OCI-LY7 (cell line): ENCODE measurements at regions of chr2 and their contacts with region 1.

Region 1: GRCh38 chr2:127591221-127591923 is 54.6 kb upstream of the GPR17 start:
- DNase-seq: peak; percentile 74
- H3K4me3 ChIP-seq: no peak overlapping the region
- H3K27ac ChIP-seq: no peak overlapping the region
- H3K4me1 ChIP-seq: no peaks in the 10 kb centered on the region
- CTCF ChIP-seq: peak; percentile 96

Region 2: GRCh38 chr2:127576433-127577207 is 14.8 kb before region 1 on chr2:
- CTCF ChIA-PET with region 1: interaction called, 13 read pairs
- POLR2A ChIA-PET with region 1: interaction called, 6 read pairs
- intact Hi-C with region 1: no loop called
- DNase-seq: no peak
- H3K4me3 ChIP-seq: no peak overlapping the region
- H3K27ac ChIP-seq: no peak overlapping the region
- H3K4me1 ChIP-seq: peaks cover 16% of the 10 kb centered on the region
- CTCF ChIP-seq: no peak

Region 3: GRCh38 chr2:127640082-127641072 is 49.0 kb after region 1 on chr2:
- CTCF ChIA-PET with region 1: interaction called, 18 read pairs
- POLR2A ChIA-PET with region 1: interaction called, 5 read pairs
- intact Hi-C with region 1: loop called (anchors 1 kb)
- DNase-seq: peak; percentile 79
- H3K4me3 ChIP-seq: no peak overlapping the region
- H3K27ac ChIP-seq: no peak overlapping the region
- H3K4me1 ChIP-seq: peaks cover 11% of the 10 kb centered on the region
- CTCF ChIP-seq: peak; percentile 64

Region 4: GRCh38 chr2:127649684-127650040 is 58.3 kb after region 1 on chr2:
- CTCF ChIA-PET with region 1: interaction called, 21 read pairs
- POLR2A ChIA-PET with region 1: interaction called, 5 read pairs
- intact Hi-C with region 1: loop called (anchors 1 kb)
- DNase-seq: peak; percentile 85
- H3K4me3 ChIP-seq: no peak overlapping the region
- H3K27ac ChIP-seq: no peak overlapping the region
- H3K4me1 ChIP-seq: no peaks in the 10 kb centered on the region
- CTCF ChIP-seq: peak; percentile 91

Region 5: GRCh38 chr2:127857265-127857808 is 266.0 kb after region 1 on chr2:
- CTCF ChIA-PET with region 1: no interaction called
- POLR2A ChIA-PET with region 1: no interaction called
- intact Hi-C with region 1: loop called (anchors 10 kb)
- DNase-seq: peak; percentile 67
- H3K4me3 ChIP-seq: peak overlapping the region; percentile 96
- H3K27ac ChIP-seq: peak overlapping the region; percentile 77
- H3K4me1 ChIP-seq: peaks cover 58% of the 10 kb centered on the region
- CTCF ChIP-seq: no peak